A549 (cell line): ENCODE measurements at regions of chr7 and their contacts with region 1.

Region 1: GRCh38 chr7:111953611-111954010 is 252.6 kb downstream of the DOCK4 start:
- DNase-seq: peak in 1 of 2 experiments; percentile 62
- ATAC-seq: peak; percentile 95 to 96
- H3K4me3 ChIP-seq: no peak overlapping the region
- H3K27ac ChIP-seq: peak overlapping the region in 1 of 2 experiments; percentile 15; a peak in 2 of 6 replicates
- H3K4me1 ChIP-seq: peaks cover 10% of the 10 kb centered on the region; the same call in 2 of the 3 replicates
- CTCF ChIP-seq: peak; percentile 56
- EP300 ChIP-seq: no peak
- POLR2A ChIP-seq: no peak
- RAD21 ChIP-seq: peak; percentile 62 to 78

Region 2: DNA sequence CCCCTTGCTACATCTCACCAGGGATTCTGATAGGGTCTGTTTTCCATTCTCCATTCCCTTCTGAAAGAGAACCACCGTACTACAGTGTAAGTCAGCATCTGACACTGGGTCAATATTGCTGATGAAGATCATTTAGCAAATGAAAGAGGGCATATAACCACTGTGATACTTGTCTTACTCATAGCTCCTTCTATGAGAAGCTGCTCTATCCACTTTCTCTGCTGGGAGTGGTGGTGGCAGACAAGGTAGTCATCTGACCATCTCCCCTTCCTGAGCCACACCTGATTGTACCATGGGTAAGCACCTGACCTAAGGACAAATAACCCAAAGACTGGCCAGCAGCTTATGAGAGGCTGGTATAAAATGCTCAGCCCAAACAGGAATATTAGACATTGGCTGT is 32.2 kb after region 1 on chr7:
- CTCF ChIA-PET with region 1: no interaction called
- POLR2A ChIA-PET with region 1: no interaction called
- DNase-seq: no peak
- ATAC-seq: no peak
- H3K4me3 ChIP-seq: no peak overlapping the region
- H3K27ac ChIP-seq: no peak overlapping the region
- H3K4me1 ChIP-seq: peaks cover 9% of the 10 kb centered on the region; the same call in 2 of the 3 replicates
- CTCF ChIP-seq: no peak
- EP300 ChIP-seq: no peak
- POLR2A ChIP-seq: no peak
- RAD21 ChIP-seq: no peak

Region 3: GRCh38 chr7:112137141-112138101 is 183.8 kb after region 1 on chr7:
- CTCF ChIA-PET with region 1: no interaction called
- POLR2A ChIA-PET with region 1: no interaction called
- DNase-seq: no peak
- ATAC-seq: no peak
- H3K4me3 ChIP-seq: no peak overlapping the region
- H3K27ac ChIP-seq: no peak overlapping the region
- H3K4me1 ChIP-seq: peaks cover 15% of the 10 kb centered on the region; the same call in 2 of the 3 replicates
- CTCF ChIP-seq: no peak
- EP300 ChIP-seq: no peak
- POLR2A ChIP-seq: no peak
- RAD21 ChIP-seq: no peak

Region 4: DNA sequence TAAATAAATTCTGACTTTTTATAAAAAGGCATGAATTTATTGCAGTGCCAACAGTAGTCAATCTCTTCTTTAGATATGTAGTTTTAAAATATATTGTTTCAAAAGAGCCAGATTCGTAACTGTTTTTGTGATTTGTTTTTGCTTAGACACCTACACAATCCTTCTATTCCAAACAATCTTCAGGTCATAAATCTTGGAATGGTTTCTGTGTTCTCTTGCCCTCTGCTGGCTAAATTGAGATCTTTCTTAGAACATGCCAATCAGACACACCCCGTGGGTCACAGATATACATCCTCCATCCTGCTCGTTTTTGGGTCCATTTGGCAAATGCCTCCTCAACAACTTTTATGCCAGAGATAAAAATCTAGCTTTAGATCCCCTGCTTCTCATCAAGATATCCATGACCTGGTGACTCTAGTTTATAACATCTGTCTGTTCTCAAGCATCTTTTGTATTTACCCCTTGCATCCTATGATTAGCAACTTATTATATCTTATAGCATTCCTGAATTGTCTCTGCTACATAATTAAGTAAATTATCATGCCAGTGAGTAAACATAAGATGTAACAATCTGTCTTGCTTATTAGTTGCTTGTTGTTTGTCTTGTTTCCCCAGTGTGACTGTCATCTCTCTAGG is 461.4 kb after region 1 on chr7:
- CTCF ChIA-PET with region 1: interaction called, 19 read pairs
- POLR2A ChIA-PET with region 1: no interaction called
- DNase-seq: peak; percentile 61 to 68
- ATAC-seq: peak; percentile 93 to 95
- H3K4me3 ChIP-seq: no peak overlapping the region
- H3K27ac ChIP-seq: no peak overlapping the region
- H3K4me1 ChIP-seq: peaks cover 2% of the 10 kb centered on the region; the same call in 1 of the 3 replicates
- CTCF ChIP-seq: peak; percentile 84
- EP300 ChIP-seq: no peak
- POLR2A ChIP-seq: no peak
- RAD21 ChIP-seq: peak; percentile 81 to 82